HCT116 (cell line): ENCODE measurements at regions of chr21 and their contacts with region 1.

Region 1: DNA sequence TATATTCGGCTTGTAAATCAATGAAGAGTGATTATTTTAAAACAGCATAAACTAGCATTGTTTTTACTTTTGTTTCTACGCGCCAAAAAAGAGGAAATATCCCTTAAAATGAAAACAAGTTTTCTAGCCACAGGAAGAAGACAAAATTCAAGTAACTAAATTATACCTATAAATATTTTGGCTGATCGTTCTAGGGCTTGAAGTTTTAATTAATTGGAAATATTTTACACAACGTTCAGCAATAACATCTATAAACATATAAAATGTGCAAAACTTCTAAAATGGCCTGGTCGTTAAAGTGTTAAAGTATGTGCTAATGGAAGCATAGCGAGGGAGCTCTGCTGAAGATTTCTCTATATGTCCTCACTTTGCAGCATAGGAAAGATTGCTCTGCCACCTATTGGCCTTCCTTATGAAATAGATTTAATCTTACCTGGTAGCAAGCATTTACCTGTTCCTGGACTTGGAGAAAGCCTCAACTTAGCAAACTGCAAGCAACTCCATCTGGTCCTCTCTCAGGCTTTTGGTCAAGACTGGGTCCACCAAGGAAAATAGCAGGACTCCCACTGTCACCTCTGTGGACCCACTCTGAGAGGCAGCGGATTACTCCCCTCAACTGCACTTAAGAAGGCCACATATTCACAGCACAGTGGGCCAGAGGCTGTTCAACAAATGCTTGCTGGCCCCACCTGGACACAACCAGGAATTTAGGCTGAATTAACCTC is 351.3 kb upstream of the RUNX1 start:
- DNase-seq: peak; percentile 81
- ATAC-seq: peak; percentile 96
- H3K4me3 ChIP-seq: no peak overlapping the region
- H3K27ac ChIP-seq: no peak overlapping the region
- H3K4me1 ChIP-seq: peaks cover 6 to 29% of the 10 kb centered on the region in 2 experiments; a peak in 3 of 4 replicates
- H3K27me3 ChIP-seq: no peaks in the 10 kb centered on the region
- CTCF ChIP-seq: peak; percentile 52 to 71 (median 65); a peak in 5 of 6 replicates
- POLR2A ChIP-seq: no peak
- RAD21 ChIP-seq: peak; percentile 89

Region 2: DNA sequence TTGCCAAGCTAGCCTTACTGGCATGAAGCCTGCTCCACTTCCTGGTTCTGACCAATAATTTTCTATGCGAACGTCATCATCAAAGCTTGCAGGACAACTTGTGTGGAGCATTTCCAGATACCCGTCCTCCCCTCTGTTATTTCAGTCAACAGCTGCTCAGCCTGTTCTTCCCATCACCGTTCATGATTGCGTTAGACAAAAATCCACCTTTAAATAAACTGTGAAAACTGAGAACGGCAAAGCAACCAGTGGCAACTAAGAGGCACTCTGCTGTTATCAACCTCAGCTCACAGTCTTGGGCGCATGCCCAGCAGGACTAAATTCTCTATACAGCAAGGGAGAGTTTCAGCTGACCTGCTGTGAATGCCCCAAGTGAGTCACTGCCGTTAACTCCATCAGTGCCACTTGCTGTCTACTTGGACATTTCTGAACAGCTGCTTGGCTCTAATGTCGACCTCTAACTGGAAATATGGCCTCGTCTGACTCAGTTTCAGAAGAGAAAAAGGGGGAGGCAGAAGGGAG is 143.9 kb before region 1 on chr21:
- CTCF ChIA-PET with region 1: no interaction called
- POLR2A ChIA-PET with region 1: no interaction called
- RAD21 ChIA-PET with region 1: no interaction called
- intact Hi-C with region 1: loop called (anchors 1 kb)
- DNase-seq: peak; percentile 89
- ATAC-seq: peak; percentile 96
- H3K4me3 ChIP-seq: peak overlapping the region; percentile 38 to 56
- H3K27ac ChIP-seq: peak overlapping the region; percentile 63
- H3K4me1 ChIP-seq: peaks cover 16 to 32% of the 10 kb centered on the region in 2 experiments
- H3K27me3 ChIP-seq: no peaks in the 10 kb centered on the region
- CTCF ChIP-seq: no peak
- POLR2A ChIP-seq: no peak
- RAD21 ChIP-seq: peak; percentile 37; the same call in 1 of the 2 replicates

Region 3: GRCh38 chr21:35932232-35932911 is 532.0 kb after region 1 on chr21:
- CTCF ChIA-PET with region 1: no interaction called
- POLR2A ChIA-PET with region 1: no interaction called
- RAD21 ChIA-PET with region 1: no interaction called
- intact Hi-C with region 1: loop called (anchors 2 kb)
- DNase-seq: peak; percentile 91
- ATAC-seq: peak; percentile 89
- H3K4me3 ChIP-seq: 0 out of 4 replicates have a peak overlapping the region, but pooled peaks of 1 of the 2 experiments have one; percentile 4
- H3K27ac ChIP-seq: peak overlapping the region; percentile 42
- H3K4me1 ChIP-seq: peaks cover 23 to 31% of the 10 kb centered on the region in 2 experiments
- H3K27me3 ChIP-seq: no peaks in the 10 kb centered on the region
- CTCF ChIP-seq: no peak
- POLR2A ChIP-seq: no peak
- RAD21 ChIP-seq: 0 out of 2 replicates have a peak, but pooled peaks have one; percentile 4